Mammary epithelial cell (primary cell): ENCODE measurements at regions of chr5 and their contacts with region 1.

Region 1: GRCh38 chr5:171630027-171630669 is 155.5 kb upstream of the SMIM23 start:
- DNase-seq: peak; percentile 40
- H3K4me3 ChIP-seq: no peak overlapping the region
- H3K27ac ChIP-seq: no peak overlapping the region
- H3K4me1 ChIP-seq: no peaks in the 10 kb centered on the region
- H3K27me3 ChIP-seq: no peaks in the 10 kb centered on the region
- CTCF ChIP-seq: peak in 1 of 2 donors; percentile 74

Region 2: DNA sequence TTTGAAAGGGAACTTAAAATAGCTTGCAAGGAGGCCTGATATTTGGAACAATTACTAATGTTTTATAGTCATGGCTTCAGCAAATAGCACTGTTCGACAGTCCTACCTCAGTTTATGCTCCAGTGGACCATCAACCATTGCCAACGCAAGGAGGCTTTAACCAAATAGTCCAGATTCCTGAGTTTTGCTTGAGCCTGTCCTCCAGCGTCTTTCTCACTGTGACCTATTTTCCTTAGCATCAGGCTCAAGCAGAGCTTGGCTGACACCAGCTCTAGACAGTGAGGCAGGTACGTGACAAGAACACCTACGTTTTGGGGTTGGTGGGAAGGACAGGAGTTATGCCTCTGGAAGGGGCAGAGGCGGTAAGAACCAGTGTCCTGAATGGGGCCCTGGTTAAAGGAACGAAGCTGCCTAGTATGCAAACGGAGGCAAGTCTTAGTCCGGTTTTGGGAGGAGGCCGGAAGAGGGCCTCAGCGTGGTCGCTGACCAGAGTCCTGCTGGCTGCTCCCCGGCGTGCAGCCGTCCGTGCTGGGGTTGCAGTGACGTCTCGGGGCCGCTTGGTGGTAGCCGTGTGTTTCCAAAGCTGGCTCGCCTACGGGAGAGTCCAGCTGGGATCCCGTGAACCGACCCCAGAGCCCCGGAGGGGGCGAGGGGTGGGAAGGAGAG is 211.7 kb before region 1 on chr5:
- CTCF ChIA-PET with region 1: no interaction called
- dilution Hi-C with region 1: no loop called
- in situ Hi-C with region 1: no loop called
- intact Hi-C with region 1: loop called (anchors 2 kb)
- DNase-seq: peak; percentile 70
- H3K4me3 ChIP-seq: peak overlapping the region in 1 of 3 experiments; percentile 31
- H3K27ac ChIP-seq: no peak overlapping the region
- H3K4me1 ChIP-seq: peaks cover 15% of the 10 kb centered on the region
- H3K27me3 ChIP-seq: peaks cover 8% of the 10 kb centered on the region
- CTCF ChIP-seq: peak; percentile 77 to 89

Region 3: GRCh38 chr5:171543148-171543815 is 86.9 kb before region 1 on chr5:
- CTCF ChIA-PET with region 1: no interaction called
- dilution Hi-C with region 1: loop called (anchors 5 kb)
- in situ Hi-C with region 1: no loop called
- intact Hi-C with region 1: no loop called
- DNase-seq: no peak
- H3K4me3 ChIP-seq: no peak overlapping the region
- H3K27ac ChIP-seq: no peak overlapping the region
- H3K4me1 ChIP-seq: no peaks in the 10 kb centered on the region
- H3K27me3 ChIP-seq: no peaks in the 10 kb centered on the region
- CTCF ChIP-seq: no peak

Region 4: GRCh38 chr5:171562822-171563221 is 67.3 kb before region 1 on chr5:
- CTCF ChIA-PET with region 1: no interaction called
- dilution Hi-C with region 1: no loop called
- in situ Hi-C with region 1: no loop called
- intact Hi-C with region 1: no loop called
- DNase-seq: peak; percentile 49
- H3K4me3 ChIP-seq: no peak overlapping the region
- H3K27ac ChIP-seq: no peak overlapping the region
- H3K4me1 ChIP-seq: no peaks in the 10 kb centered on the region
- H3K27me3 ChIP-seq: no peaks in the 10 kb centered on the region
- CTCF ChIP-seq: no peak

Region 5: DNA sequence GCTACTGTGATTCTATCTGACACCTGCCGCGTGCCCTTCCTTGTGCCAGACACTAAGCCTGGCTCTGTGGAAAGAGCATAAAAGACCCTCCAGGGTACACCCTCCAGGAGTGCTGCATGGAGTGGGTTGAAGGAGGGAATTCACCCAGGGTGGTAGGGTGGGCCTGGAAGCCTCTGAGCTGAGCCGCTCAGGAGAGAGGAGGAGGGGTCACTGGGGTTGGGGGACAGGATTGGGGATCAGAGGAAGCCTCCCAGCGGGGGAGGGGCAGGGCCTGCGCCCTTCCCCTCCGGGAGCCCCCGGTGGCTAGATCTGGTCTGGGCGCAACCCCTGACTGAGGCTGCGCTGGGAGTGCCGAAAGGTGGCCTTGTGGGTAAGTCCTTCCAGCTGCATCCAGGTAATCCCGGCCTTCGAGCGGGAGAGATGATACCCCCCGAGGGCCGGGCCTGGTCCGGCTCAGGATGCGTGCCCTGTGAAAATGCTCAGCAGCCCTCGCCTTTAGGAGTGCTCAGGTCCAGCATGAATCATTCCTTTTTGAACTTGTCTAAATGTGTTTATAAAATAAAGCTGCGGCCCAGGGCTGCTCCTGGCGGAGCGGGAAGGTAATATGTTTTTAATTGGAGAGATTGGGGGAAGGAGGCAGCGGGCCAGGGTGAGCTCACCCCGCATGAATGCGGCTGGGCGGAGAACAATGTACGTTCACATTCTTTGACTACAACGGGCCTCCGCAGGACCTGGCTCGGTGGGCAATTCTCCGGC is 37.4 kb after region 1 on chr5:
- CTCF ChIA-PET with region 1: interaction called, 4 read pairs
- dilution Hi-C with region 1: no loop called
- in situ Hi-C with region 1: no loop called
- intact Hi-C with region 1: loop called (anchors 5 kb)
- DNase-seq: peak; percentile 82
- H3K4me3 ChIP-seq: peak overlapping the region in 1 of 3 experiments; percentile 1
- H3K27ac ChIP-seq: peak overlapping the region; percentile 36
- H3K4me1 ChIP-seq: peaks cover 13% of the 10 kb centered on the region
- H3K27me3 ChIP-seq: no peaks in the 10 kb centered on the region
- CTCF ChIP-seq: peak; percentile 17 to 39

Region 6: DNA sequence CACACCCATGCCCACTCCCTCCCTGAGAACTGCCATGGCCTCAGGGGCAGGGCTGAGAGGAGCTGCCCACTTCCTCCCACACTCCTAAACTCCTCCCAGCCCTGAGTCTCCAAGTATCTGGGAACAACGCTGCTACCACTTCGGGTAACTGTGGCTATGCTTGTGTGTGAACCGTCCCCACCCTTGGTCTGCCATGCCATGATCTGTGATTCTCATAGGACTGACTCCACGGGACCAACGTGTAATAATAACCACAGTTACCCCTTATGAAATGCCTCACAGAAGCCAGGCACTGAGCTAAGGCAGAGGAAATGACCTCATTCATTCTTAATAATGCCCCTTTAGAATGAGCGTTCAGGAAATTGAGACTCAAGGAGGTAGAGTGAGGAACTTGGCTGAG is 51.5 kb after region 1 on chr5:
- CTCF ChIA-PET with region 1: no interaction called
- dilution Hi-C with region 1: no loop called
- in situ Hi-C with region 1: no loop called
- intact Hi-C with region 1: no loop called
- DNase-seq: peak; percentile 29
- H3K4me3 ChIP-seq: no peak overlapping the region
- H3K27ac ChIP-seq: no peak overlapping the region
- H3K4me1 ChIP-seq: peaks cover 10% of the 10 kb centered on the region
- H3K27me3 ChIP-seq: no peaks in the 10 kb centered on the region
- CTCF ChIP-seq: no peak

Region 7: DNA sequence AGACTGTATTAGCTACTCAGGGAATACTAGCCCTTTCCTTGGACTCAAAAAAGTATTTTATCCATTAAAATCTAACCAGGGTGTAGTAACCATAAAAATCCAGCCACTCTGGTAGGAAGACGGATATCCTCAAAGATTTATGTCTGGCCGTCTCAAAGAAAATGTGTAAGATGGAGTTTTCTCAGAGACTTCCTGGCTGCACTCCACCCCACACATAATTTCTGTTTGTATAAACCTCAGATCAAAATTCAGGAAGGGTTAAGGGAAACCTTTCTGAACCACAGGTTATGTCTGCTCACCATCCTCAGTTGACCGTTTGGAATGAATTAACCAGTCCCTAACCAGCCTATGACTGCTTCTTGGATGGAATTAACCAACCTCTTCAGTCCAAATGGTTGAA is 141.7 kb after region 1 on chr5:
- CTCF ChIA-PET with region 1: no interaction called
- dilution Hi-C with region 1: no loop called
- in situ Hi-C with region 1: no loop called
- intact Hi-C with region 1: loop called (anchors 2 kb)
- DNase-seq: no peak
- H3K4me3 ChIP-seq: no peak overlapping the region
- H3K27ac ChIP-seq: no peak overlapping the region
- H3K4me1 ChIP-seq: peaks cover 4% of the 10 kb centered on the region
- H3K27me3 ChIP-seq: no peaks in the 10 kb centered on the region
- CTCF ChIP-seq: no peak

Region 8: GRCh38 chr5:171907725-171908343 is 277.7 kb after region 1 on chr5:
- CTCF ChIA-PET with region 1: no interaction called
- dilution Hi-C with region 1: no loop called
- in situ Hi-C with region 1: no loop called
- intact Hi-C with region 1: loop called (anchors 1 kb)
- DNase-seq: peak; percentile 48
- H3K4me3 ChIP-seq: no peak overlapping the region
- H3K27ac ChIP-seq: no peak overlapping the region
- H3K4me1 ChIP-seq: no peaks in the 10 kb centered on the region
- H3K27me3 ChIP-seq: no peaks in the 10 kb centered on the region
- CTCF ChIP-seq: peak; percentile 68 to 83